ENCODE measurements at regions of chr1 and their contacts with region 1.

Region 1: DNA sequence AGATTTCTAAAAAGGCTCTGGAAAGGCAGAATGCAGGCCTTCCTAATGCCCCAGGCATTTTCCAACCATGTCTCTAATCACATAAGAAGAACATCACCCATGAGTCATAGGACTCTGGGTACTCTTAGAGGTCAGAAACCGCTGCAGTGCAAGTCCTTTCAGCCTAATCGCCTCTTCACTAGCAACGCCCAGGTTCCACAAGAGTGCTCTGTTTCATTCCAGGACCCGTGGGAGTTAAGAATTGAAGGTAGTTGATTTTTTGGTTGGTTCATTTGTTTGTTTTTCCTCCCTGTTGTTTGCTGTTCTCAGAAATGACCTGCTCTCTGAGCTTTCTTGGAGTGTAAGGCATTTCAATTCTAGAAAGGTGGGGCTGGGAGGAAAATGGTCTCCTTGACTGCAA is 123.2 kb downstream of the NR5A2 start:
- DNase-seq: peak; percentile 60
- ATAC-seq: peak; percentile 96
- H3K4me3 ChIP-seq: no peak overlapping the region
- H3K27ac ChIP-seq: 0 out of 2 replicates have a peak overlapping the region, but pooled peaks have one; percentile 11
- H3K4me1 ChIP-seq: peaks cover 9% of the 10 kb centered on the region; the same call in 1 of the 2 replicates
- H3K27me3 ChIP-seq: no peaks in the 10 kb centered on the region
- CTCF ChIP-seq: no peak

Region 2: DNA sequence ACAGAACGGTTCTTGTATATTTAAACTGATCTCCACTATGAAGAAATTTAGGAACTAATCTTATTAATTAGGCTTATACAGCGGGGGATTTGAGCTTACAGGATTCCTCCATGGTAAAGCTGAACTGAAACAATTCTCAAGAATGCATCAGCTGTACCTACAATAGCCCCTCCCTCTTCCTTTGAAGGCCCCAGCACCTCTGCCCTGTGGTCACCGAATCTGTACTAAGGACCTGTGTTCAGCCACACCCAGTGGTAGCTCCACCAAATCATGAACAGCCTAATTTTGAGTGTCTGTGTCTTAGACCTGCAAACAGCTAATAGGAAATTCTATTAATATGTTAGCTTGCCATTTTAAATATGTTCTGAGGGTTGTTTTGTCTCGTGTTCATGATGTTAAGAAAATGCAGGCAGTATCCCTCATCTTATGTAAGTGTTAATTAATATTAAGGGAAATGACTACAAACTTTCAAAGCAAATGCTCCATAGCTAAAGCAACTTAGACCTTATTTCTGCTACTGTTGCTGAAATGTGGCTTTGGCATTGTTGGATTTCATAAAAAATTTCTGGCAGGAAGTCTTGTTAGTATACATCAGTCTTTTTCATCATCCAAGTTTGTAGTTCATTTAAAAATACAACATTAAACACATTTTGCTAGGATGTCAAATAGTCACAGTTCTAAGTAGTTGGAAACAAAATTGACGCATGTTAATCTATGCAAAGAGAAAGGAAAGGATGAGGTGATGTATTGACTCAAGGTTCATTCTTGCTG is 24.0 kb after region 1 on chr1:
- CTCF ChIA-PET with region 1: no interaction called
- POLR2A ChIA-PET with region 1: interaction called, 15 read pairs
- in situ Hi-C with region 1: no loop called
- intact Hi-C with region 1: no loop called
- DNase-seq: no peak
- ATAC-seq: no peak
- H3K4me3 ChIP-seq: no peak overlapping the region
- H3K27ac ChIP-seq: no peak overlapping the region
- H3K4me1 ChIP-seq: no peaks in the 10 kb centered on the region
- H3K27me3 ChIP-seq: no peaks in the 10 kb centered on the region
- CTCF ChIP-seq: no peak